Psoas muscle (tissue), 8 donors: ENCODE measurements at regions of chr19 and their contacts with region 1.

Region 1: DNA sequence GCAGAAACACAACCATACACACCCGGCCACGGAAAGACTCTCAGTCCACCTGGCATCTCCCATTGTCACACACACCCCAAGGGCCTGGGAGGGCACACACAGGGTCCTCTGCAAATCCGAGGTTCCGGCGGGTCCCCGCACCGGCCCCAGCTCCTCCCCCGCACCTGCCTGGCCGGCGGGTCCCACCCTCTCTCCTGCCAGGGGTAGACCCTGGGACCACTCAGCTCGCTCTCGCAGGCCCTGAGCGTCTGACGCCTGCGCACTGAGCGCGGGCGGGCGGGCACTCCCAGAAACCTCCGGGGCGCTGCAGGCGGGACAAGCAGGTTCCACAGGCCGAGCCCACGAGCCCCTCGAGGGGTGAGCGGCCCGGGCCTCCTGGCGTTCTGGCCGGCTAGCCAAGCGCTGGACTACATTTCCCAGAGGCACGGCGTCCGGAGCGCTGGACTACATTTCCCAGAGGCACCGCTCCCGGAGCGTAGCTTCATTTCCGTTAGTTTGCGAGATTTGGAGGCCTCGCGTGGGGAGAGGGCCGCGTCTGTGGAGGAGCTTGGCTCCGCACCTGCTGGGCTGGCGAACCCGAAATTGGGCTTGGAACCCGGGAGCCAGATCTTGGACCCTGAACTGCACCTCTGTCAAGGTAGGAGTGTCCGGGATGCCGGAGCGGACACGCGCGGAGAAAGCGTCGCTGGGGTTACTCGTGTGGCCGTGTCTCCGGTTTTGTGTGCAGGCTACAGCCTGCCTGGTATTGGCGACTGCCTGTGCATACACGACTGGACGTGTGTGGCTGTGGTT is at the start of gene ZNF420:
- DNase-seq: peak; percentile 94 to 96
- ATAC-seq: peak; percentile 99 to 100 (median 100)
- H3K4me3 ChIP-seq: peak within 1 kb of the TSS; percentile 77
- H3K27ac ChIP-seq: peak within 1 kb of the TSS; percentile 79
- H3K4me1 ChIP-seq: peaks cover 8% of the 10 kb centered on the region
- H3K27me3 ChIP-seq: no peaks in the 10 kb centered on the region
- CTCF ChIP-seq: no peak
- total RNA-seq, gene ZNF420: 4.4 to 10.6 (median 7.1) TPM

Region 2: DNA sequence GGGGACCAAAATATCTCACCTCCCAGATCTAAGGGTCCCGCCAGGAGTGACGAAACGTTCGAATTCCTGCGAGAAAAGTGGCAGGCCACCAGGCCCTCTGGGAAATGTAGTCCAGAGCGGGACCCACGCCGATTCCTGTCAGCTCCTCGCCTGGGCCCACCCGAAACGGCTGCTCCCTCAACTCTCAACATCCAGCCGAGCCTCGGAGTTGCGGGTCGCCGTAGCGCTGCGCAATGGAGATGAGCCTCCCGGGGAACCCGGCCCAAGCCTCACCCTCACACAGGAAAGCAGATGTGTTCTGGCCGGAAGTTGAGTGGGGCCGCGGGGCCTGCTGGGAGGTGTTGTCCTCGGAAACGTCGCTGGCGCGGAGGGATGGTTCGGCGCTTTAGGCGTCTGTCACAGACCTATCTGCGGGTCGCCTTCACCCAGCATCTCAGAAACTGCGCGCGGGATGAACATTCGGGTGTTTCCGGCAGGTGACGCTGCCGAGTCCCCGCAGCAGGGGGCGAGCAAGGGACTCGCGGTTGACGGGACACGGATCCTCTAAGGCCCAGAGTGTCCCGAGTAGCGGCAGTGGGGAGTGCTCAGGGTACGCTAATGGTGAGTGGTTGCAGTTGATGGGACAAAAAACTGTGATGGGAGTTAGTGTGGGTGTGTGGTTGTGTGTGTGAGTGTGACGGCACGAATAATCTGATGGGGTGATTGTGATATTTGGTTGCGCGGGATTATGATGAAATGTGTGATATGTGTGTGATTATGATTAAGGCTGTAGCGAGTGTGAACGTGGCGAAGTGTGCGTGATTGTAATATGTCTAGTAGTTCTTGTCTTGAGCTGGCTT is 161.9 kb before region 1 on chr19 and contains the starts of genes ZNF568 and ZNF829:
- intact Hi-C with region 1: loop called in 1 of 2 experiments (anchors 5 kb)
- DNase-seq: peak; percentile 88 to 95
- ATAC-seq: peak; percentile 96 to 99 (median 98)
- H3K4me3 ChIP-seq: peak within 1 kb of the TSS; percentile 95
- H3K27ac ChIP-seq: peak within 1 kb of the TSS; percentile 97
- H3K4me1 ChIP-seq: no peaks in the 10 kb centered on the region
- H3K27me3 ChIP-seq: no peaks in the 10 kb centered on the region
- CTCF ChIP-seq: peak; percentile 57
- total RNA-seq, gene ZNF568: 4.8 to 13.9 (median 7.3) TPM
- total RNA-seq, gene ZNF829: 0.92 to 1.5 (median 1.1) TPM

Region 3: DNA sequence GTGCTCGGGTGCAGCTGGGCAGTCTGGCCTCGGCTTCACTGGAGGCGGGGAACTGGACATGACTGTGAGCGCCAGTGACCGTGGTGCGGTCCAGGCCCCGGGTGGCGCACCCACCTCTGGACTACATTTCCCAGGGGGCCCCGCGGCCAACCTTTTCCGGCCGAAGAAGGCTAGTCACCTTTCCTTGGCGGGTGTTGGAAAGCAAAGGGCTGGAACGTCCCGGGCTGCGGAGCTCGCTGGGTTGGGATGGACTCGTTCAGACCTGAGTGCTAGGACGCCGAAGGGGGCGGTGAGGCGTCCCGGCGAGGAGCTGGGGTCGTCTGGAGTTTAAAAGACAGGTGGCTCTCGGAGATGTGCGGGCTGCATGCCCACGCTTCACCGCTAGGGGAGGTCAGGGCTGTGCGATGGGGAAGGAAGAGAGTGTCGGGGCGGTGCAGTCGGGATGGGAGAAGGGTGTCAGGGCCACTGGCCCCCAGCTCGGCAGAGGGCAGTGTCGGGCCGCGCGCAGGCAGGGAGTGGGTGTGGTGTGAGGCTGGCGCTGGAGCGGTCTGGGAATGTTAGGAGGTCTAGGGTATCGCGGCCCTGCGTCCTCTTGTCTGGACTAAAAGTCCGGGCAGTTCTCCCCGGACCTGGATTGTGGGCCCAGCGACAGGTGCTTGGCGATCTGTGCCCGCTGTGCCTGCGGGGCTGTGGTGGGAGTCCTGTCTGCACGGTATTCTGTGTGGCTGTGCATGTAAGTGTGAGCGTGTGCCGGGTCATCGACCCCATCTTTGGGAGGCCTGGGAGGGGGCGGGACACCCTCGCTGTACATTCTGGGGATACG is 104.9 kb before region 1 on chr19:
- intact Hi-C with region 1: loop called in 1 of 2 experiments (anchors 5 kb)
- DNase-seq: peak; percentile 84 to 87
- ATAC-seq: peak; percentile 94 to 97 (median 96)
- H3K4me3 ChIP-seq: peak overlapping the region; percentile 82
- H3K27ac ChIP-seq: peak overlapping the region; percentile 79
- H3K4me1 ChIP-seq: no peaks in the 10 kb centered on the region
- H3K27me3 ChIP-seq: no peaks in the 10 kb centered on the region
- CTCF ChIP-seq: peak; percentile 64

Region 4: GRCh38 chr19:36986601-36987000 is 91.5 kb before region 1 on chr19:
- intact Hi-C with region 1: loop called in 1 of 2 experiments (anchors 5 kb)
- DNase-seq: no peak
- ATAC-seq: no peak
- H3K4me3 ChIP-seq: no peak overlapping the region
- H3K27ac ChIP-seq: no peak overlapping the region
- H3K4me1 ChIP-seq: no peaks in the 10 kb centered on the region
- H3K27me3 ChIP-seq: no peaks in the 10 kb centered on the region
- CTCF ChIP-seq: no peak

Region 5: DNA sequence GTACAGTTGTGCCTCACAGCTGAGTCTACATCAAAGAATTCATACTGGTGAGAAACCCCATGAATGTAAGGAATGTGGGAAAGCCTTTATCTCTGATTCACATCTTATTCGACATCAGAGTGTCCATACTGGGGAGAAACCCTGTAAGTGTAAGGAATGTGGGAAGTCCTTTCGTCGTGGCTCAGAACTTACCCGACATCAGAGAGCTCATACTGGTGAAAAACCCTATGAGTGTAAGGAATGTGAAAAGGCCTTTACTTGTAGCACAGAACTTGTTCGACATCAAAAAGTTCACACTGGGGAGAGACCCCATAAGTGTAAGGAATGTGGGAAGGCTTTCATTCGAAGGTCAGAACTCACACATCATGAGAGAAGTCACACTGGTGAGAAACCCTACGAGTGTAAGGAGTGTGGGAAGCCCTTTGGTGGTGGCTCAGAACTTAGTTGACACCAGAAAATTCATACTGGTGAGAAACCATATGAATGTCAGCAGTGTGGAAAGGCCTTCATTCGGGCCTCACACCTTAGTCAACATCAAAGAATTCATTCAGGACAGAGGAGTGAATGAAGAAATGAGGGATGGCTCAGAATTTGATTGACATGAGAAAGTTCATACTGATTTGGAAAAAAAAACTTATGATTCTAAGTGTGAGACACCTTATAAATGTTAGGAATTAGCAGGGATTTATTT is 80.8 kb before region 1 on chr19:
- intact Hi-C with region 1: no loop called
- DNase-seq: no peak
- ATAC-seq: no peak
- H3K4me3 ChIP-seq: no peak overlapping the region
- H3K27ac ChIP-seq: no peak overlapping the region
- H3K4me1 ChIP-seq: no peaks in the 10 kb centered on the region
- H3K27me3 ChIP-seq: no peaks in the 10 kb centered on the region
- CTCF ChIP-seq: no peak